ENCODE measurements at regions of chr9 and their contacts with region 1.

Region 1: DNA sequence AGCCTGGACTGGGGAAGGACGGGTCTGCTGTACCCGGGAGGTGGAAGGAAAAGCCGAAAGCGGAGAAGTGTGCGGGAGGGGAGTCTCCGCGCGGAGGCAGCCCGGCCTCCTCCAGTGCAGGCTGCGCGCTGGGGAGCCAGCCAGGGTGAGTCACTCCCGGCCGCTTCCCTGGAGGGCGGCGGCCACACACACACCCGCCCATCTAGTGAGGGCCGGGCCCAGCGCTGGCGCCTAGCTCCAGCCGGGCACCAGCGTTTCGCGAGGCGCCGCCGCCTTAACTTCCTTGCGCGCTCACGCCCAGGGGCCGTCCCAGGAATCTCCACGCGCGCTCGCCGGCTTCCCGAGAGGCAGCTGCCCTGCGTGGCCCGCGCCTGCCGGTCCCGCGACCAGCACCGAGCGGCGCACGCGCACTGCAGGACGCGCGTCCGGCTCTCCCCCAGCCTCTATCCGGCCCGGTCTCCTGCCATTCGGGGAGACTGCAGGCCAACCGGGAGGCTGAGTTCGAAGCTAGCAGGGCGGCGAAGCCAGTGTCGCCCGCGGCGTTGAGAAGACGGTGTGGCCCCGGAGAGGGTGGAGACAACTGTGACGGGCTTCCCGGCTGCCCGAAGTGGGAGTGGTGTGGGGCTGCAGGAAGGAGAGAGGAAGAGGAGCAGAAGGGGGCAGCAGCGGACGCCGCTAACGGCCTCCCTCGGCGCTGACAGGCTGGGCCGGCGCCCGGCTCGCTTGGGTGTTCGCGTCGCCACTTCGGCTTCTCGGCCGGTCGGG is at the start of gene JAK2:
- DNase-seq: peak; percentile 77 to 96
- H3K4me3 ChIP-seq: peak within 1 kb of the TSS; percentile 73 to 83
- H3K27ac ChIP-seq: peak within 1 kb of the TSS; percentile 96 to 97
- H3K4me1 ChIP-seq: peaks cover 4 to 37% of the 10 kb centered on the region in 2 donors
- H3K27me3 ChIP-seq: no peaks in the 10 kb centered on the region
- CTCF ChIP-seq: peak in 2 of 3 experiments; percentile 29 to 41
- total RNA-seq, gene JAK2: 31.9 TPM

Region 2: DNA sequence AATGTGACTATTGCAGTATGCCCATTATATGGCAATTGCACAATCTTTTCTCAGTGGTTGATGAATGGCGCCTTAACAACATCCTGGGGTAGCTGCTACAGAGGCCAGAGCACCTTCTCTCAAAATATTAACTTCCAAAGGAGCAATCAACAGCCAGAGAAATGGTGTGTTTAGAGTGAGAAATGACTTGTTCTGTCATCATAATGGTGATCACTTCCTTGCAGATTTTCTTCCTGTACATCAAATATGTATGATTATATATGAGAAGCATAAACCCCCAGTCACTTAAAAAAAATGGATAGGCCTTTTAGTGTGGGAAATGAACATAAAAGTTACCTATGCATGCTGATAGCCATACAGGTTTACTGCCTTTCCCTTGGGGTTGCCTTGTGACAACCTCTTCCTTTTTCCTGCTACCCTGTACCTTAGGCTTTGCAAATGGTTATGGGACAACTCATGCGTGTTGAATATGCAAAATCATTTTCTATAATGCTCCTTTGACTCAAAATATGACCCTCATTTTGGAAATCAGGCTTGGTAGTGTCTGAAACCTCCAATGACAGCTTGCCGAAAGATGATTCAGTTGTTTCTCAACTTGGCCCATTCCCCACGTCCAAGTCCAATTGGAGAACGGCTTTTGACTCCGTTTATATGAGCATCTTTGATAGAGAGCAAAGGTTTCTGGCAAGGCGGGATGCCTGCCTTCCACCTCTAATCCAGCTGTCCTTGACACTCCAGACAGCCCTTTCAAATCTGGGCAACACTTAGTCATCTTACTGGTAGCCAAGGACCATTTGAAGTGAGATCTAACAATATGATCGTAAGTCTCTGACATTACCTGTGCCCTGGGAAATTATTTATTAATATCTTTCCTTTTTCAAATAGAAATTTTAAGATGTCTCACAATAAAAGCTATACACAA is 425.3 kb before region 1 on chr9:
- intact Hi-C with region 1: no loop called
- DNase-seq: no peak
- H3K4me3 ChIP-seq: no peak overlapping the region
- H3K27ac ChIP-seq: no peak overlapping the region
- H3K4me1 ChIP-seq: no peaks in the 10 kb centered on the region
- H3K27me3 ChIP-seq: no peaks in the 10 kb centered on the region
- CTCF ChIP-seq: no peak

Region 3: DNA sequence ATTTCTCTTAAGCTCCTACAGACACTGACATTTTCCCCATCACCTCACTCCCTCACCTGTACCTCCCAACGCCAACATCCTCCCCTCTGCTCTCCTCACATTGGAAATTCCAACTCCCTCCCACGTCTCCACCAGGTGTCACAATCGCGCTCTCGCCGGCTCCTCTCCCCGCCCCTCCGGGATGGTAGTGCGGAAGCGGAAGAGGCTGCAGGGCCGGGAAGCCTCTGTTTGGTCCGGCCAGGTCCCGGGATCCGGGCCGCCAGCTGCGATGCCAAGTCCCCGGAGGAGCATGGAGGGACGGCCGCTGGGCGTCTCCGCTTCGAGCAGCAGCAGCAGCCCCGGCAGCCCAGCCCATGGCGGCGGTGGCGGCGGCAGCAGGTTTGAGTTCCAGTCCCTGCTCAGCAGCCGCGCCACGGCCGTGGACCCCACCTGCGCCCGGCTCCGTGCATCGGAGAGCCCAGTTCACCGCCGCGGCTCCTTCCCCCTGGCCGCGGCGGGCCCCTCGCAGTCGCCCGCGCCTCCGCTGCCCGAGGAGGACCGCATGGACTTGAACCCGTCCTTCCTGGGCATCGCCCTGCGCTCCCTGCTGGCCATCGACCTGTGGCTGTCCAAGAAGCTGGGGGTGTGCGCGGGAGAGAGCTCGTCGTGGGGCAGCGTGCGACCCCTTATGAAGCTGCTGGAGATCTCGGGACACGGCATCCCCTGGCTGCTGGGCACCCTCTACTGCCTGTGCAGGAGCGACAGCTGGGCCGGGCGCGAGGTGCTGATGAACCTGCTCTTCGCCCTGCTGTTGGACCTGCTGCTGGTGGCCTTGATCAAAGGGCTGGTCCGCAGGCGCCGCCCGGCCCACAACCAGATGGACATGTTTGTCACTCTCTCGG is 322.5 kb before region 1 on chr9 and contains the start of gene PLPP6:
- intact Hi-C with region 1: loop called (anchors 5 kb)
- DNase-seq: peak; percentile 59 to 95
- H3K4me3 ChIP-seq: peak within 1 kb of the TSS; percentile 66 to 86
- H3K27ac ChIP-seq: peak within 1 kb of the TSS; percentile 82 to 87
- H3K4me1 ChIP-seq: peaks cover 7 to 16% of the 10 kb centered on the region in 2 donors
- H3K27me3 ChIP-seq: no peaks in the 10 kb centered on the region
- CTCF ChIP-seq: peak; percentile 33 to 67 (median 45)
- total RNA-seq, gene PLPP6: 19.2 TPM

Region 4: DNA sequence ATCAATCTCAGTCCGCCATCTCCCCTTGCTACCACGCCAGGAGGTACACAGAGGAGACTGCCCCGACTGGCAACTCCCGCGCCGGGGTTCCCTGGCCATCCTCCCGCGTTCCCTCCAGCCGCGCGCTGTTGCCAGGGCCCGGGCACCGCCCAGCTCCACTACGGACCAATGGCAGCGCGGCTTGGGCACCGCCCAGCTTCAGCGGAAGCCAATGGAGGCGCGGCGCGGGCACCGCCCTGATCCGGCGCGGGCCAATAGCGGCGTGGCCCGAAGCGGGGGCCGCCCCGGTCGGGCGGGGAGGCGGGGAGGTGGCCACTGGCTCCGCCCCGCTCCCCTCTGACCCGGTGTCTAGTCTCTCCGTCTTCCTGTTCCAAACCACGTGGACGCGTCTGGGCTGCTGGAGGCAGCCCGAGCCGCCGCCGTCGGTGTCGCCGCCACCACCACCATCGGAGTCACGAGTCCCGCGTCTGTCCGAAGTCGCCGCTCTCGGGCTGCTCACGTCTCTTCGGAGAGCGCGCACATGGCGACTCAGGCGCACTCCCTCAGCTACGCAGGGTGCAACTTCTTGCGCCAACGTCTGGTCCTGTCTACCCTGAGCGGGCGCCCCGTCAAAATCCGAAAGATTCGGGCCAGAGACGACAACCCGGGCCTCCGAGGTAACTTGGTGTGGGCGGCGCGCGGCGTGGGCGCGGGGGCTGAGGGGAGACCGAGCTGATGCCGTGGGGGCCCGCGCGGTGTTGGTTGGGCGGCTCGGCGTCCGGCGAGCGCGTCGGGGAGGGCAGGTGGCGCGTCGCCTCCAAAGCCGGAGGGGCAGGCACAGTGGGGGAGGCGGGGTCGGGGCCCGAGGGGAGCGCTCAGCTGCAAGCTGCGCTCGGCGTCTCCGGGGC is 192.0 kb before region 1 on chr9 and contains the start of gene RCL1:
- intact Hi-C with region 1: loop called (anchors 1 kb)
- DNase-seq: peak; percentile 83 to 97
- H3K4me3 ChIP-seq: peak within 1 kb of the TSS; percentile 75 to 77
- H3K27ac ChIP-seq: peak within 1 kb of the TSS; percentile 89 to 93
- H3K4me1 ChIP-seq: peaks cover 0 to 4% of the 10 kb centered on the region in 2 donors
- H3K27me3 ChIP-seq: no peaks in the 10 kb centered on the region
- CTCF ChIP-seq: no peak
- total RNA-seq, gene RCL1: 28.3 TPM

Region 5: DNA sequence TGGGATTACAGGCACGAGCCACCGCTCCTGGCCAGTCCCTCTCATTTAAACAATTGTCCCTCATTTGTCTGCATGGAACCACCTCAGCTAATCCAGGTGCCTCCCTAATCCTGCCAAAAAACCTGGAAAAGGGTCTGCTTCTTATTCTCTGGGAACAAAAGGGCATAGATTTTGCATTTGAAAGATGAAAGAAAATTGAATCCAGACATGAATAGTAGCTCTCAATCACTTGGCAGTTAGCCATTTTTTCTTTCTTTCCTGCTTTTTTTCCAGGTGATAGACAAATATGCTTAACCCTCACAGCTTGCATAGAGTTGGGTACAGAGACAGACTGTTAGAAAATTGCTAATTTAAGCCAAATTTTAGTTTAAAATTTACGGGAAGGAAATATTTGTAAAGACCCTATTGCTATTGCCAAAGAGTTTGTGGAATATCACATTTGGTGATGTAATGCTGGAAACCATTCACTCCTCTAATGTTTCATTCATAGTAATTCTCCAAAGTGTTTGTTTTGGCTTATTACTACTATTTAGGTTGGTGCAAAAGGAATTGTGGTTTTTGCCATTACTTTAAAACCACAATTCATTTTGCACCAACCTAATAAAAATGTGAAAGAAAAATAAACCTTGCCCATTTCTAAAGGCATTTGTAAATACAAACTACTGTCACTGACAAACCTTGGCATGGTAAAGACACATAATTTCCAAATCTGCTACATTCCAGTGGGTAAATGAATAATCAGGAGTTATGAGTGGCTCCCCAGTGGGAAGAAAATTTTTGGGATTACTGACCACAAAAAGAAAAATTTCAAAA is 80.3 kb before region 1 on chr9:
- intact Hi-C with region 1: loop called (anchors 2 kb)
- DNase-seq: no peak
- H3K4me3 ChIP-seq: no peak overlapping the region
- H3K27ac ChIP-seq: peak overlapping the region; percentile 31 to 41
- H3K4me1 ChIP-seq: peaks cover 4 to 13% of the 10 kb centered on the region in 2 donors
- H3K27me3 ChIP-seq: no peaks in the 10 kb centered on the region
- CTCF ChIP-seq: no peak

Region 6: DNA sequence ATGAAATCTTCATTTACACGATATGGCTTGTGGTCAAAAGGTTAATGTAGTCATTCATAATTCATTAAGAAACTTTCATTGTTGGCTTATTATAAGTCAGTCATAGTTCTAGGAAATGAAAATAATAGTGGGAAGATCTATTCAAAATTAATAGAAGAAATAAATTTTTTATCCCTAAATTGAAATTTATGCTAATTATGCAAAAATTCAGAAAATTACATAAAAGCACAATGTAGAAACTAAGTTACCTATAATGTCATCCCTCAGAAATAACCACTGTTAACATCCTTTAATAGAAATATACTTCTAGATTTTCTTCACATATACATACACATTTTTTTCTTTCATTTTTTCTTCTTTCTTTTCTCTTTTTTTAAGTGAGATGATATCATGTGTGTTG is 15.7 kb before region 1 on chr9:
- intact Hi-C with region 1: loop called (anchors 2 kb)
- DNase-seq: no peak
- H3K4me3 ChIP-seq: no peak overlapping the region
- H3K27ac ChIP-seq: no peak overlapping the region
- H3K4me1 ChIP-seq: peaks cover 0 to 9% of the 10 kb centered on the region in 2 donors
- H3K27me3 ChIP-seq: no peaks in the 10 kb centered on the region
- CTCF ChIP-seq: no peak

Region 7: DNA sequence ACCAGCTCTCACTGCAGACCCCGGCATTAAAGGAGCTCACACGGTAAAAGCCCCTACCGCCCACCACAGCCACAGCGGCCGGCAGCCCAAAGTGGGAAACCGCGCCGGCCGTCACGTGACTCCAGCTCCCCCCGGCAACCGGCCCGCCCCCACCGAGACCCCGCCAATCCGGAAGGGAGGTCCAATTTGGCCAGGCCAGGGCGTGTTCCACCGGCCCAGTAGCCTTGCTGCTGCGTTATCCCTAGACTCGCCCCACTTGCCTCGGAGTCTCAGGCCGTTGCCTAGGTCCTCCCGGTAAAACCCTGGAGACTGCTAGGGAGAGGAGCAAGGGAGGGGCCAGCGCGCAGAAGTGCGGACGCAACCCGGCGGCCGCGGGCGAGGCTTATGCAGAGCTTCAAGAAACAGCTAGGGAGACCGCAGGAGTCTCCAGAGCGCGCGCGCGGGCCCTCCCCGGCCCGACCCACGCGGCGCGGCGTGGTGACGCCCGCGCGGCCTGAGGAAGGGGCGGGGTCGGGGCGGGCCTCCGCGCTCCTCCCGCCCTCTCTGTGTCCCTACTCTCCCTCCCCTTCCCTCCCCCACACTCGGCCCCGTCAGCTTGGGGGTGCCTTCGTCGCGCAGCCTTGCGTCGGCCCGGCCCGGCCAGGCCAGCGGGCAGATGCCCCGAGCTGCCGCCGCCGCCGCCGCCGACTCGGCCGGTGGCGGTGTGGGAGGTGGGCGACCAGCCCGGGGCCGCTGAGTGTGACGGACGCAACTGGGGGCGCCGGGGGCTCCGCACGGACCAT is 643.9 kb after region 1 on chr9 and contains the start of gene RIC1:
- intact Hi-C with region 1: loop called (anchors 10 kb)
- DNase-seq: peak; percentile 77 to 95
- H3K4me3 ChIP-seq: peak within 1 kb of the TSS; percentile 93 to 98
- H3K27ac ChIP-seq: peak within 1 kb of the TSS; percentile 95 to 99
- H3K4me1 ChIP-seq: peaks cover 5 to 43% of the 10 kb centered on the region in 2 donors
- H3K27me3 ChIP-seq: no peaks in the 10 kb centered on the region
- CTCF ChIP-seq: no peak
- total RNA-seq, gene RIC1: 46.7 TPM

Measured in ascending aorta (tissue), 2 donors.